CD8-positive, alpha-beta T cell (primary cell): ENCODE measurements at regions of chr17 and their contacts with region 1.

Region 1: DNA sequence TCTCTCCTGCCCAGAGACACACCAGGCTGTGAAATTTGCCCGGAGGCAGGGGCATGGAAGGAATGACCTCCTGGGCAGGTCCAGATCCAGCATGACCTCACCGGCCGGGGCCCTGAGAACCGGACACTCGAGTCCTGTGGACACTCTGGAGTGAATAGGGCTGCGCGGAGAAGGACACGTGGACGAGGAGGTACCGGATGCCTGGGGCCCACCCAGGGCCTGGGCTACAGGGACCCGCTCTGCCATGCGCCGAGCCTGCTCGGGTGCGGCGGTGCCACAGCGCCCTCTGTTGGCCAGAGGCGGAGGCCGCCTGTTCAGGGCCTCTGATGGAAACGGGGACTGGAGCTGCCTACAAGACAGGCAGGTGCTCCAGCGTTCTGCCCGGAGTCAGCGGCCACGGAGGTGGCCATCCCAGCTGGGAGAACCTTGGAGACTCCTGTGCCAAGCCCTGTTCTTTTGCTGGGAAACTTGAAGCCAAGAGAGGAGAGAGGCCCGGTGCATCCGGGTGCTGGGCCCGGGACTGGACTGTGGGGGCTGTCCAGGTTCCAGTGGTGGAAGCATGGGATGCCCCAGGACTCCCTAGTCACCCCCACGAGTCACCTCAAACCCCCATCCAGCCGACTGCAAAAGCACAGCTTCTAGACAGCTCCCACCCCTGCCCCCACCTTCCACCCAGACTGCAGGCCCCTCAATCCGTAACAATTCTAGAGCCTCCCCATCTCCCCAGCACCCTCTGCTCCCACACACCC is 19.3 kb upstream of the NXPH3 start:
- DNase-seq: peak; percentile 68 to 89 (median 81)
- ATAC-seq: peak; percentile 99
- H3K4me3 ChIP-seq: no peak overlapping the region
- H3K4me3 Mint-ChIP-seq: no peak overlapping the region
- H3K27ac ChIP-seq: no peak overlapping the region
- H3K27ac Mint-ChIP-seq: no peak overlapping the region
- H3K4me1 ChIP-seq: peaks cover 7% of the 10 kb centered on the region
- H3K4me1 Mint-ChIP-seq: peaks cover 5% of the 10 kb centered on the region
- H3K27me3 ChIP-seq: no peaks in the 10 kb centered on the region
- H3K27me3 Mint-ChIP-seq: peaks cover 3% of the 10 kb centered on the region
- CTCF ChIP-seq: peak; percentile 92

Region 2: GRCh38 chr17:49315551-49316257 is 240.7 kb before region 1 on chr17:
- CTCF ChIA-PET with region 1: interaction called, 11 read pairs
- POLR2A ChIA-PET with region 1: no interaction called
- intact Hi-C with region 1: loop called (anchors 2 kb)
- DNase-seq: peak; percentile 54 to 89 (median 80)
- ATAC-seq: peak; percentile 100
- H3K4me3 ChIP-seq: no peak overlapping the region
- H3K4me3 Mint-ChIP-seq: peak overlapping the region; percentile 69
- H3K27ac ChIP-seq: peak overlapping the region in 1 of 2 experiments; percentile 38
- H3K27ac Mint-ChIP-seq: peak overlapping the region; percentile 84
- H3K4me1 ChIP-seq: peaks cover 10% of the 10 kb centered on the region
- H3K4me1 Mint-ChIP-seq: peaks cover 23% of the 10 kb centered on the region
- H3K27me3 ChIP-seq: no peaks in the 10 kb centered on the region
- H3K27me3 Mint-ChIP-seq: no peaks in the 10 kb centered on the region
- CTCF ChIP-seq: peak; percentile 95

Region 3: GRCh38 chr17:49414622-49415350 is 141.6 kb before region 1 on chr17 and contains the start of gene PHB1:
- CTCF ChIA-PET with region 1: interaction called, 131 read pairs
- POLR2A ChIA-PET with region 1: interaction called, 3 read pairs
- intact Hi-C with region 1: no loop called
- DNase-seq: peak; percentile 86 to 98 (median 94)
- ATAC-seq: peak; percentile 98
- H3K4me3 ChIP-seq: peak within 1 kb of the TSS; percentile 80 to 96
- H3K4me3 Mint-ChIP-seq: peak within 1 kb of the TSS; percentile 99
- H3K27ac ChIP-seq: peak within 1 kb of the TSS; percentile 43 to 61
- H3K27ac Mint-ChIP-seq: peak within 1 kb of the TSS; percentile 93
- H3K4me1 ChIP-seq: peaks cover 12% of the 10 kb centered on the region
- H3K4me1 Mint-ChIP-seq: peaks cover 31% of the 10 kb centered on the region
- H3K27me3 ChIP-seq: no peaks in the 10 kb centered on the region
- H3K27me3 Mint-ChIP-seq: no peaks in the 10 kb centered on the region
- CTCF ChIP-seq: no peak
- total RNA-seq, gene PHB1: 26.3 to 27.0 TPM

Region 4: DNA sequence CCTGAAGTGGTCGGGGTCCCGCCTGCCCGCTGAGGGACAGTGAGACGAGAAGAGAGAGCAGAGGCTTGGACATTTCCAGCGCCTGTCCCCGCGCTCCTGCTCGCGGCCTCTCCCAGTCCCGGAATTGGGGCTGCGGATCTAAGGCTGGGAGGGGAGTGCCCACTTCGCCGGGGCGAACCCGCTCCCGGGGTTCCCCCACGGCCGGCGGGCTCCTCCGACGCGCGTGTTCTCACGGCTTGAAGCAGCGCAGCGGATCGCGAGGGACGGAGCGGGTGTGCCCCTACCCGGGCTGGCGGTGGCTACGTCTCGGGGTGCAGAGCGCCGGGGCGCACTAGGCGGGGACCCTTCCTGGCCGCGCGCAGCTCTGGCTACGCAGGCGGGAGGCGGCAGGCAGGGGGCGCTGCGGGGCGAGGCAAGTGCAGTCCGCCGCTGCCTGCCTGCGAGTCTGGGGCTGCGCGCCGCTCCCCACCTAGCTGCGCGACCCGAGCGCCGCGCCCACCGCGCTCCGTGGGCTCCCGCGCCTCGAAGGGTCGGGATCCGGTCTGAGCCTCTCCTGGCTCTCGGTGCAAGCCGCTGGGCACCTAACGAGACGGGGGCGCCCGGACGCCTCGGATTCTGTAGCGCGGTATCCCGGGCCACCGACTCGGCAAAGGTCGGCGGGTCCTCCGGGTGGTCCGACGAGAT is 60.1 kb before region 1 on chr17:
- CTCF ChIA-PET with region 1: interaction called, 51 read pairs
- POLR2A ChIA-PET with region 1: interaction called, 4 read pairs
- intact Hi-C with region 1: loop called in 1 of 2 experiments (anchors 1 kb)
- DNase-seq: peak; percentile 74 to 91 (median 85)
- ATAC-seq: peak; percentile 83
- H3K4me3 ChIP-seq: peak overlapping the region; percentile 53 to 67
- H3K4me3 Mint-ChIP-seq: peak overlapping the region; percentile 79
- H3K27ac ChIP-seq: no peak overlapping the region
- H3K27ac Mint-ChIP-seq: no peak overlapping the region
- H3K4me1 ChIP-seq: peaks cover 33% of the 10 kb centered on the region
- H3K4me1 Mint-ChIP-seq: peaks cover 28% of the 10 kb centered on the region
- H3K27me3 ChIP-seq: peaks cover 28 to 29% of the 10 kb centered on the region in 2 experiments
- H3K27me3 Mint-ChIP-seq: peaks cover 36% of the 10 kb centered on the region
- CTCF ChIP-seq: peak; percentile 89

Region 5: GRCh38 chr17:49567871-49568694 is 11.7 kb after region 1 on chr17:
- CTCF ChIA-PET with region 1: interaction called, 39 read pairs
- POLR2A ChIA-PET with region 1: no interaction called
- intact Hi-C with region 1: no loop called
- DNase-seq: peak; percentile 69 to 91 (median 82)
- ATAC-seq: peak; percentile 59
- H3K4me3 ChIP-seq: peak overlapping the region; percentile 6 to 25
- H3K4me3 Mint-ChIP-seq: peak overlapping the region; percentile 62
- H3K27ac ChIP-seq: no peak overlapping the region
- H3K27ac Mint-ChIP-seq: no peak overlapping the region
- H3K4me1 ChIP-seq: peaks cover 12% of the 10 kb centered on the region
- H3K4me1 Mint-ChIP-seq: peaks cover 8% of the 10 kb centered on the region
- H3K27me3 ChIP-seq: no peaks in the 10 kb centered on the region
- H3K27me3 Mint-ChIP-seq: peaks cover 12% of the 10 kb centered on the region
- CTCF ChIP-seq: peak; percentile 96

Region 6: DNA sequence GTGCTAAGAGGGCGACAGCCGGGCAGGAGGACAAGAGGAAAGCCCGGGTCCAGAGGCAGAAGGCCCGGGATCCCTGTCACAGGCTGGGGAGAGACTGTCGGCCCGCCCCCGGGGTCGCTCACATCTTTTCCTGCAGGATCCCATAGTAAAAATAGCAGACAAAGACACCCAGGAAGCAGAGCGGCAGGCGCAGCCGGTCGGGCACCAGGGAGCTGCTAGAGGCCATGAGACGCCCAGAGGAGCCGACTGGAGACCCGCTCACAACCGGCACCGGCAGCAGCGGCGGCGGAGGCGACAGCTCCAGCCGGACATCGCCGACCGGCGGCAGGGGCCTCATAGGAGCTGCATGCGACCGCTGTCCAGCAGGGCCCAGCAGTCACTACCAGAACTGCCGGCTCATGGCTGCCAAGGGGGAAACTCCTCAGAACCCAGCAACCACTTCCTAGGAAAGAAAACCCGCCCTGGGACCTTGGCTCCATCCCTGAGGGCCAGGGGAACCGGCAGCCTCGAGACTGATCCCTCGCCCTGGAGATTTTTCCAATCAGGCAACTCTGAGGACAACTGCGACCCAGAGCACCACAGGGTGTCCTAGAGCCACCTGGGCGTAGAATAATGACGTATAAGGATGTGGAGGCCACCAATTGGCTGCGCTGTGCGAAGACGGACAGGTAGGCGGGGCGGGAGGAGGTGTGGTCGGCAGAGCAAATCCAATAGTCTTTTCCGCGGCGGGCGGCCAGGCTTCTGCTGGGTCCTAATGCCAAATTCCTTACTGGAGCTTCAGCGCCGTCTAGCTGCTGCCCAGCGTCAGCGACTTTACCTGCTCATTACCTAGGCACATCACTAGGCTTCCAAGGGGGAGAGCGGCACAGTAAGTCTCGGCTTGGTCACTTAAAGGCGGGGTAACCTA is 151.5 kb after region 1 on chr17 and contains the start of gene SLC35B1:
- CTCF ChIA-PET with region 1: interaction called, 542 read pairs
- POLR2A ChIA-PET with region 1: no interaction called
- intact Hi-C with region 1: no loop called
- DNase-seq: peak; percentile 96 to 100 (median 98)
- ATAC-seq: peak; percentile 97
- H3K4me3 ChIP-seq: peak within 1 kb of the TSS; percentile 87 to 93
- H3K4me3 Mint-ChIP-seq: peak within 1 kb of the TSS; percentile 93
- H3K27ac ChIP-seq: peak within 1 kb of the TSS; percentile 95 to 97
- H3K27ac Mint-ChIP-seq: peak within 1 kb of the TSS; percentile 98
- H3K4me1 ChIP-seq: peaks cover 21% of the 10 kb centered on the region
- H3K4me1 Mint-ChIP-seq: peaks cover 42% of the 10 kb centered on the region
- H3K27me3 ChIP-seq: no peaks in the 10 kb centered on the region
- H3K27me3 Mint-ChIP-seq: no peaks in the 10 kb centered on the region
- CTCF ChIP-seq: peak; percentile 80
- total RNA-seq, gene SLC35B1: 57.7 to 64.2 TPM